ENCODE measurements at regions of chr14 and their contacts with region 1.

Region 1: DNA sequence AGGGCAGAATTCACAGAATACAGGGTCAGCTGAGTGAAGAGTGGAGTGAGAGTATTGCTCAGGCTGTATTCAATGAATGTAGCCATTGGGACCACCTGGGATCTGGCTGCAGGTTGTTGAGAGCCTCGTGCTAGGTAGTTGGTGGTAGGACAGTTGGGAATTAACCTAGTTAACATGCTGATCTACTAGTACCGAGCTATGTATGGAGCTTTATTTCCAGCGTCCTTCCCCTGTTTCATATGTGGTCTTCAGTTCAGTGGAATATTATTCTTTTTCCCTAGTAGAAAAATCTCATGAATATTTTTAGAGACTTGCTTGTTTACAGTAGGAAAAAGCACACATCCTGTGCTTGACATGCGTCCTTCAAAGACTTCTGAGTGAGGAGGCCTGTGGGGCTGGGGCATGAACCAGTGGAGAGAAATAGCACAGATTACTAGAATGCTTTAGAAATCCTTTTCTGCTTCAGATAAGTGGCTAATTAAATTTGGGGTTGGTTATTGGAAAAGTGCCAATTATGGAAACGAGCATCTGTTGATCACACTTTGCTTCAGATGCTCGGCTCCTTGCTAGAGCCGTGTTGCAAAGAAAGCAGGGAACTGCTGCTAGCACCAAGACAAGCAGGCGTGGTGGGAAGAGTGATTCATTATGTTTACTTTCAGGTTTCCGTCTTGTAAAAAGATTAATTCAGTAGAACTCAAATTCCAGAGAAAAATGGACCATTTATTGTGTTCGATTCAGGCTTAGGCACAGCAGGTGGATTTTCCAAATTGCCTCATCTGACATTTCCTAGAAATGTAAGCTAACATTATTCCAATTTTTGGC is 53.6 kb downstream of the ARF6 start:
- DNase-seq: peak; percentile 51
- H3K4me3 Mint-ChIP-seq: peak overlapping the region; percentile 24
- H3K27ac Mint-ChIP-seq: peak overlapping the region; percentile 83
- H3K4me1 Mint-ChIP-seq: peaks cover 72% of the 10 kb centered on the region
- H3K27me3 Mint-ChIP-seq: no peaks in the 10 kb centered on the region

Region 2: DNA sequence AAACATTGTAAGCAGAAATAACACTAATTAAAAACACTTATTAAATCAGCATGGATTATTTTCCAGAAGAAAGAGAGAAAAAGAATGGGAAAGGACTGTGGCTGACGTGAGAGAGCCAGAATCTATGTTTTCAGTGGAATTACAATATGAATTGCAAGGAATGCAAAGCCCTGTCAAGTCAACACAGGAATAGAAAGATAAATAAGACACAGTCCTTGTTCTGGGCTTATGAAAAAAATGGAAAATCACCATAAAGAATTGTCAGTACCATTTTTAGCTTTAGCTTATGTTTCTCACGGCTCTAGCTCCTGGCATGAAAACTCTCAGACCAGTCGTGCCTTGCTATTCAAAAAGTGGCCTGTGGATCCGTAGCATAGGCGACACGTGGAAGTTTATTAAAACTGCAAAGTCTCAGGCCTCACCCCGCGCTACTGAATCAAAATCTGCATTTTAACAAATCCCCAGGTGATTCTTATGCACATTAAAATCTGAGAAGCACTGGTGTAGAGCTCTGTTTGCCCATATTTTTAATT is 909.5 kb before region 1 on chr14:
- CTCF ChIA-PET with region 1: no interaction called
- POLR2A ChIA-PET with region 1: no interaction called
- intact Hi-C with region 1: no loop called
- DNase-seq: no peak
- H3K4me3 Mint-ChIP-seq: no peak overlapping the region
- H3K27ac Mint-ChIP-seq: no peak overlapping the region
- H3K4me1 Mint-ChIP-seq: no peaks in the 10 kb centered on the region
- H3K27me3 Mint-ChIP-seq: no peaks in the 10 kb centered on the region

Region 3: GRCh38 chr14:49620182-49621113 is 326.1 kb before region 1 on chr14 and contains the starts of genes MGAT2 and RPL36AL:
- CTCF ChIA-PET with region 1: no interaction called
- POLR2A ChIA-PET with region 1: no interaction called
- intact Hi-C with region 1: no loop called
- DNase-seq: peak; percentile 98
- H3K4me3 Mint-ChIP-seq: peak within 1 kb of the TSS; percentile 96
- H3K27ac Mint-ChIP-seq: peak within 1 kb of the TSS; percentile 96
- H3K4me1 Mint-ChIP-seq: peaks cover 39% of the 10 kb centered on the region
- H3K27me3 Mint-ChIP-seq: no peaks in the 10 kb centered on the region
- total RNA-seq, gene MGAT2: 40.4 to 43.7 TPM
- total RNA-seq, gene RPL36AL: 314 to 320 TPM

Region 4: GRCh38 chr14:49897968-49898367 is 48.6 kb before region 1 on chr14:
- CTCF ChIA-PET with region 1: no interaction called
- POLR2A ChIA-PET with region 1: interaction called, 4 read pairs
- intact Hi-C with region 1: loop called (anchors 2 kb)
- DNase-seq: no peak
- H3K4me3 Mint-ChIP-seq: peak overlapping the region; percentile 75
- H3K27ac Mint-ChIP-seq: peak overlapping the region; percentile 93
- H3K4me1 Mint-ChIP-seq: peaks cover 29% of the 10 kb centered on the region
- H3K27me3 Mint-ChIP-seq: no peaks in the 10 kb centered on the region

Region 5: GRCh38 chr14:49908432-49908781 is 38.1 kb before region 1 on chr14:
- CTCF ChIA-PET with region 1: no interaction called
- POLR2A ChIA-PET with region 1: interaction called, 4 read pairs
- intact Hi-C with region 1: loop called (anchors 1 kb)
- DNase-seq: no peak
- H3K4me3 Mint-ChIP-seq: peak overlapping the region; percentile 5
- H3K27ac Mint-ChIP-seq: no peak overlapping the region
- H3K4me1 Mint-ChIP-seq: peaks cover 36% of the 10 kb centered on the region
- H3K27me3 Mint-ChIP-seq: no peaks in the 10 kb centered on the region

Region 6: GRCh38 chr14:49962621-49963020 is 16.1 kb after region 1 on chr14:
- CTCF ChIA-PET with region 1: no interaction called
- POLR2A ChIA-PET with region 1: interaction called, 4 read pairs
- intact Hi-C with region 1: loop called (anchors 1 kb)
- DNase-seq: peak; percentile 90
- H3K4me3 Mint-ChIP-seq: no peak overlapping the region
- H3K27ac Mint-ChIP-seq: peak overlapping the region; percentile 61
- H3K4me1 Mint-ChIP-seq: peaks cover 43% of the 10 kb centered on the region
- H3K27me3 Mint-ChIP-seq: no peaks in the 10 kb centered on the region

Region 7: GRCh38 chr14:49982501-49982951 is 36.0 kb after region 1 on chr14:
- CTCF ChIA-PET with region 1: no interaction called
- POLR2A ChIA-PET with region 1: interaction called, 4 read pairs
- intact Hi-C with region 1: loop called (anchors 1 kb)
- DNase-seq: peak; percentile 44
- H3K4me3 Mint-ChIP-seq: peak overlapping the region; percentile 54
- H3K27ac Mint-ChIP-seq: peak overlapping the region; percentile 82
- H3K4me1 Mint-ChIP-seq: peaks cover 81% of the 10 kb centered on the region
- H3K27me3 Mint-ChIP-seq: no peaks in the 10 kb centered on the region